Sigmoid colon (tissue), 7 donors: ENCODE measurements at regions of chr2 and their contacts with region 1.

Region 1: GRCh38 chr2:11477994-11478393 is 12.0 kb upstream of the E2F6 start:
- DNase-seq: peak; percentile 93
- H3K4me3 ChIP-seq: no peak overlapping the region
- H3K27ac ChIP-seq: no peak overlapping the region
- H3K4me1 ChIP-seq: peaks cover 0 to 10% (median 9%) of the 10 kb centered on the region in 4 donors
- H3K27me3 ChIP-seq: peaks cover 13 to 43% (median 29%) of the 10 kb centered on the region in 3 donors
- CTCF ChIP-seq: peak; percentile 44 to 82 (median 74)
- EP300 ChIP-seq: no peak
- POLR2A ChIP-seq: no peak

Region 2: GRCh38 chr2:11583840-11584524 is 106.0 kb after region 1 on chr2:
- intact Hi-C with region 1: loop called (anchors 1 kb)
- DNase-seq: peak; percentile 86
- H3K4me3 ChIP-seq: no peak overlapping the region
- H3K27ac ChIP-seq: peak overlapping the region in 2 of 4 donors; percentile 20 to 54
- H3K4me1 ChIP-seq: peaks cover 0 to 10% (median 0%) of the 10 kb centered on the region in 4 donors
- H3K27me3 ChIP-seq: no peaks in the 10 kb centered on the region
- CTCF ChIP-seq: peak; percentile 7 to 57 (median 52)
- EP300 ChIP-seq: no peak
- POLR2A ChIP-seq: no peak

Region 3: GRCh38 chr2:11681722-11682589 is 204.0 kb after region 1 on chr2:
- intact Hi-C with region 1: loop called (anchors 5 kb)
- DNase-seq: peak; percentile 53
- H3K4me3 ChIP-seq: no peak overlapping the region
- H3K27ac ChIP-seq: no peak overlapping the region
- H3K4me1 ChIP-seq: no peaks in the 10 kb centered on the region
- H3K27me3 ChIP-seq: peaks cover 0 to 24% (median 8%) of the 10 kb centered on the region in 3 donors
- CTCF ChIP-seq: peak in 3 of 4 experiments; percentile 12 to 55 (median 32)
- EP300 ChIP-seq: no peak
- POLR2A ChIP-seq: no peak

Region 4: DNA sequence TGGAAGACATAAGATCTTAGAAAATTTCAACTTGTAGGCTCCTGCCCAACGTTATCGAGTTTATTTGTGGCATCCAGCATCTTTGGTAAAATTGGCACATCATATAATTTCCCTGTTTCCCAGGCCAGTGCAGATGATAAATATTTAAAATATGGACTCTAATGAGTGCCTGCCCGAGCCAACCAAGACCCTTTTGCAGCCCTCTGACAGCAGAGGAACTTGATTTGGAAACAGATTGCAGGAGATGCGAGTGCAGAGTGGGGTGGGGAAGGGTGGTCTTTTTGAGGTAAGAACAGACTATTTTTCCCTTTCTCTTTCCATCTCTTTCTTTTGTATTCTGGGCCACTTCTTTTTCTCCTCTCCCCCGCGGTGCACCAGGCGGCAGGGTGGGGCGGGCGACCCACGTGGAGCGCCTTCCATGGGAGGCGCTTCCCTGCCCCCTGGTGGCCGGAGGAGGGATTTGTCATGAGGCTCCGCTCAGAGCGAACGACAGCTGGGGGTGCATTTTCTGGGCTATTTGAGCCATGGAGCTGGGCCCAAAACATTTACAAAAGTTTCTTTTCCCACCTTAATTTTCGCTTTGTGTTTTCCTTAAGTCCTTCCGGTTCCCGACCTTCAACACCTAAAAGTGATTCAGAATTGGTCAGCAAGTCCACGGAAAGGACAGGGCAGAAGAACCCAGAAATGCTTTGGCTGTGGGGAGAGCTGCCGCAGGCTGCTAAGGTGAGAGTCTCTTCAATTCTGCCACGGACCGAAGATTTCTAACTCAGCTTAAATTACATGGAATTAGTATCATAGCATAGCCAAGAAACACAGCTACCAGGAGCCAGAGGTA is 301.1 kb after region 1 on chr2:
- intact Hi-C with region 1: loop called (anchors 2 kb)
- DNase-seq: peak; percentile 87
- H3K4me3 ChIP-seq: no peak overlapping the region
- H3K27ac ChIP-seq: no peak overlapping the region
- H3K4me1 ChIP-seq: peaks cover 0 to 33% (median 27%) of the 10 kb centered on the region in 4 donors
- H3K27me3 ChIP-seq: no peaks in the 10 kb centered on the region
- CTCF ChIP-seq: peak; percentile 91 to 98 (median 95)
- EP300 ChIP-seq: no peak
- POLR2A ChIP-seq: no peak